A549 (cell line): ENCODE measurements at regions of chr20 and their contacts with region 1.

Region 1: GRCh38 chr20:3135507-3136070 is 24.1 kb downstream of the FASTKD5 start:
- DNase-seq: no peak
- ATAC-seq: peak in 1 of 2 experiments; percentile 29; a peak in 2 of 6 replicates
- H3K4me3 ChIP-seq: no peak overlapping the region
- H3K27ac ChIP-seq: peak overlapping the region in 1 of 2 experiments; percentile 29; a peak in 1 of 6 replicates
- H3K4me1 ChIP-seq: peaks cover 30% of the 10 kb centered on the region
- CTCF ChIP-seq: no peak
- EP300 ChIP-seq: no peak
- POLR2A ChIP-seq: no peak
- RAD21 ChIP-seq: no peak

Region 2: GRCh38 chr20:3580412-3580811 is 444.8 kb after region 1 on chr20:
- CTCF ChIA-PET with region 1: no interaction called
- POLR2A ChIA-PET with region 1: interaction called, 11 read pairs
- DNase-seq: no peak
- ATAC-seq: peak in 1 of 2 experiments; percentile 33; a peak in 1 of 6 replicates
- H3K4me3 ChIP-seq: no peak overlapping the region
- H3K27ac ChIP-seq: no peak overlapping the region
- H3K4me1 ChIP-seq: no peaks in the 10 kb centered on the region
- CTCF ChIP-seq: no peak
- EP300 ChIP-seq: no peak
- POLR2A ChIP-seq: no peak
- RAD21 ChIP-seq: 0 out of 5 replicates have a peak, but pooled peaks of 1 of the 2 experiments have one; percentile 5